ENCODE measurements at regions of chr6 and their contacts with region 1.

Region 1: DNA sequence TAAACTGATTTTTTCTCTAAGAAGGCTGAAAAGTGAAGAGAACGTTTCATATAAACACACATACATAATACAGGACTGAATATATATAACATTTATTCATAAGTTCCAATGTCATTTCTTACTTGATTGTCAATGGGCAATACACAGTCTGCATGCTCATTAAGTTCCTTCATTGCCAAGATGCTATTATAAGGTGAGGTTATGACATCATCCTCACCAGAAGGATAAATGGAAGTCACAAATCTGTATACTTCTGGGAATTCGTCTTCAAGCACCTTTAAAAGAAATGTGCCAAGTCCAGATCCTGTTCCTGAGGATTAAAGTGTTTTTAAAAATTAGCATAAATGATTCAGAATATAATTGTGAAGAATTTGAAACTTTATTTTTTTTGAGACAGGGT is 11.1 kb downstream of the TUBE1 start:
- DNase-seq: no peak
- ATAC-seq: no peak

Region 2: DNA sequence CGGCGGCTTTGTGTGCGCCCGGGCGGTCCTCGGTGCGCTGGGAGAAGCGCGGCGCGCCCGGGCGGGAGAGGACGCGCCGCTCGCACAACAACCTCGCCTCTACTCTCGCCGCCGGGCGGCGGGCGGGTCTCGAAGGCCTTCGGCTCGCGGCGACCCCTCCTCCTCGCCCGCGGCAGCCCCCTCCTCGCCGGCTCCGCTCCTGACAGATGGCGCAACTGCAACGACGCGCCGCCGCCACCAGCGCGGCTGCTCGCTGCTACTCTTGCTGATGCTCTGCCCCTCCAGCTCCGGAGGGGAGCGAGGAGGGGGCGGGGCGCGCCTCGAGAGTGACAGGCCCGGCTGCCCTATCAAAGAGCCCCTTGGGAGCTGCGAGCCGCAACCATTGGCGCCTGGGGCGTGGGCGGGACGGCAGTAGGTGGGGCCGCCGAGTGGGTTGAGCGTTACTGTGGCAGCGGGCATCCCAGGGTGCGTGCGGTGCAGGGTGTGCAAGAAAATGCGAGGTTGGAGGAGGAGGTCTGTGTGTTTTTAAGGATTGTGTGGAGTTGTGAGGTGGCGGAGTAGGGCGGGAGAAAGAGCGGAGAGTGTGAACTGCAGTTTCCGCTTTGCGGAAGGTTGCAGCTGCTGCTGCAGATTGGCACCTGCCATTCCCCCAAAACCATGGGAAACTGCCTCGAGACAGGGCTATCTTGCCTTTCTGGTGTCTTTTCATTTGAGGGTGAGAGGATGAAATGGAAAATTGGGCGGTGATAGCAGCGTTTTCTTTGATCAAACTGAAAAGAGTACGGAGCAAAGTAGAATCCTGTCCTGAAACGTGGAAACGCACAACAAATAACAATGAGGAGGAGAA is 202.8 kb before region 1 on chr6 and contains the start of gene FYN:
- intact Hi-C with region 1: no loop called
- DNase-seq: peak; percentile 99
- ATAC-seq: peak; percentile 99
- total RNA-seq, gene FYN: 50.4 TPM

Region 3: DNA sequence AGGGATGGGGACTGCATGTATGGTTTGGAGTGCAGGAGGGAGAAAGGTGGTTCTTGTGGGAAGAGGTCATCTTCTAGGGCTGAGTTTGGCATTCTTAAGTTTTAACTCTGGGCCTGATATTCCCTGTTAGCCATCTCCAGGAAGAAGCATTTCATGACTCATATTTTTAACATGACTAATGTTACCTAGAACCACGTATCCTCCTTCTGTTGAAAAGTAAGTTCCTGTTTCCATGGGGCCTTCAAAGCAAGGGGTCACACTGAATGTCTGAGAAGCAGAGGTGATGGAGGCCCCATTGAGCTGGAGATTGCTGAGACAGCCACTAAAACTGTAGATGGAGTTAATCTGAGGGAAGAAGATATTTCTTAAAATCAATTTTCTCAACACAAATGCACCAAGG is 41.4 kb after region 1 on chr6:
- intact Hi-C with region 1: no loop called
- DNase-seq: no peak
- ATAC-seq: no peak

Region 4: DNA sequence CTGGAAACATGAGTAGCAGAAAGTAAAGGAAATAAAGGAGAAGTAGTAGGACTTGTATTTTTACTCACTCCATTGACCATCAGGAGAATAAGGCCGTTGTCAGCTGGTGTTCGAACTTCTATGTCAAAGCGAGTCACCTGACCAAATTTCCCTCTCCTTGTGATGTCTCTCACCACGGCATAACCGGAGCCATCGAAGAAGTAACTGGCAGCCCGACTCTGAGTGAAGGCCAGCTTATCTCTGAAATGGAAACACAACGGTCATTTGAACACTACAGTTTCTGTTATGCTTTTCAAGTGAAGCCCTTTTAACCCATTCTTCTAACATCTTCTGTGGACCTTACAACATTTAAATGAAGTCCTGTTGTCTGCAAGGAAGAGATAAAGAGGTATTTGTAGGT is 62.9 kb after region 1 on chr6:
- intact Hi-C with region 1: loop called (anchors 10 kb)
- DNase-seq: peak; percentile 59
- ATAC-seq: no peak